ENCODE measurements at regions of chr1 and their contacts with region 1.

Region 1: DNA sequence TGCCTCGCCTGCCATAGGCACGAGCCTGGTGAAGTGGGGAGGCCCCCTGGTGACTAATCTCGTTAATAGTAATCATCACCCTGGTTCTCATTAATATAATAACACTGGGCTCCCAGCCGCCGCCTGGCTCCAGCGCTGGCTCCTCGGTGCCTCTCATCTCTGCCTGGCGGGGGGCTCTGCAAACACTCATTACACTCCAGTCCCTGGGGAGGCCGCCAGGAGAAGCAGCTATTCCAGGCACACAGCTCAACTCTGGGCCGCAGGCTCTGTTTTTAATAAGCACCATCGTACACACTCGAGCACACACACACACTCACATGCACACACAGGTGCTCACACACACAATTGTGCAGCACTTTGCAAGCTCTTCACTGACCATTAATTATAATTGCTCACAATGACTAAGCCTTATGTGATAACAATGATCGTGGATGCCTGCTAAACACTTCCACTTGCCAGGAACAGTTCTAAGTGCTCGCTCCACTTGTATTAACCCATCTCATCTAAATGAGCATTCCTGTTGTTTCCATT is 52.2 kb downstream of the SDC3 start:
- DNase-seq: no peak
- ATAC-seq: no peak
- H3K4me3 ChIP-seq: no peak overlapping the region
- H3K27ac ChIP-seq: no peak overlapping the region
- H3K4me1 ChIP-seq: peaks cover 12% of the 10 kb centered on the region
- H3K27me3 ChIP-seq: no peaks in the 10 kb centered on the region
- CTCF ChIP-seq: no peak
- POLR2A ChIP-seq: no peak
- RAD21 ChIP-seq: no peak

Region 2: GRCh38 chr1:29415156-29415830 is 1441.0 kb before region 1 on chr1:
- CTCF ChIA-PET with region 1: no interaction called
- POLR2A ChIA-PET with region 1: no interaction called
- dilution Hi-C with region 1: no loop called
- in situ Hi-C with region 1: no loop called
- intact Hi-C with region 1: no loop called
- DNase-seq: no peak
- ATAC-seq: no peak
- H3K4me3 ChIP-seq: no peak overlapping the region
- H3K27ac ChIP-seq: no peak overlapping the region
- H3K4me1 ChIP-seq: no peaks in the 10 kb centered on the region
- H3K27me3 ChIP-seq: no peaks in the 10 kb centered on the region
- CTCF ChIP-seq: no peak
- POLR2A ChIP-seq: no peak
- RAD21 ChIP-seq: no peak

Region 3: GRCh38 chr1:30809514-30810263 is 46.6 kb before region 1 on chr1:
- CTCF ChIA-PET with region 1: no interaction called
- POLR2A ChIA-PET with region 1: no interaction called
- dilution Hi-C with region 1: no loop called
- in situ Hi-C with region 1: no loop called
- intact Hi-C with region 1: loop called (anchors 2 kb)
- DNase-seq: peak; percentile 93
- ATAC-seq: peak; percentile 91
- H3K4me3 ChIP-seq: no peak overlapping the region
- H3K27ac ChIP-seq: peak overlapping the region; percentile 79
- H3K4me1 ChIP-seq: peaks cover 29% of the 10 kb centered on the region
- H3K27me3 ChIP-seq: no peaks in the 10 kb centered on the region
- CTCF ChIP-seq: no peak
- POLR2A ChIP-seq: no peak
- RAD21 ChIP-seq: no peak; the same call in 1 of the 2 replicates

Region 4: GRCh38 chr1:30823969-30824735 is 32.2 kb before region 1 on chr1:
- CTCF ChIA-PET with region 1: no interaction called
- POLR2A ChIA-PET with region 1: interaction called, 3 read pairs
- dilution Hi-C with region 1: no loop called
- in situ Hi-C with region 1: no loop called
- intact Hi-C with region 1: loop called (anchors 5 kb)
- DNase-seq: peak; percentile 100
- ATAC-seq: peak; percentile 95
- H3K4me3 ChIP-seq: peak overlapping the region; percentile 57
- H3K27ac ChIP-seq: peak overlapping the region; percentile 88
- H3K4me1 ChIP-seq: peaks cover 20% of the 10 kb centered on the region
- H3K27me3 ChIP-seq: no peaks in the 10 kb centered on the region
- CTCF ChIP-seq: no peak
- POLR2A ChIP-seq: peak; percentile 68; the same call in 1 of the 2 replicates
- RAD21 ChIP-seq: peak; percentile 40

Measured in IMR-90 (cell line).